ENCODE measurements at regions of chr10 and their contacts with region 1.

Region 1: GRCh38 chr10:116796910-116797513 is 52.3 kb upstream of the ENO4 start:
- DNase-seq: peak; percentile 65
- ATAC-seq: peak; percentile 98
- H3K4me3 ChIP-seq: no peak overlapping the region
- H3K27ac ChIP-seq: no peak overlapping the region
- H3K4me1 ChIP-seq: no peaks in the 10 kb centered on the region
- H3K27me3 ChIP-seq: no peaks in the 10 kb centered on the region
- CTCF ChIP-seq: peak; percentile 98 to 100 (median 100)
- POLR2A ChIP-seq: no peak
- RAD21 ChIP-seq: peak; percentile 100

Region 2: GRCh38 chr10:116627386-116627933 is 169.6 kb before region 1 on chr10:
- CTCF ChIA-PET with region 1: interaction called, 12 read pairs
- POLR2A ChIA-PET with region 1: no interaction called
- RAD21 ChIA-PET with region 1: no interaction called
- intact Hi-C with region 1: no loop called
- DNase-seq: peak; percentile 29
- ATAC-seq: peak; percentile 96
- H3K4me3 ChIP-seq: peak overlapping the region; percentile 38 to 50
- H3K27ac ChIP-seq: no peak overlapping the region
- H3K4me1 ChIP-seq: peaks cover 0 to 8% of the 10 kb centered on the region in 2 experiments; a peak in 1 of 4 replicates
- H3K27me3 ChIP-seq: no peaks in the 10 kb centered on the region
- CTCF ChIP-seq: peak; percentile 68 to 90 (median 76)
- POLR2A ChIP-seq: no peak
- RAD21 ChIP-seq: peak; percentile 94

Region 3: GRCh38 chr10:116771101-116771958 is 25.7 kb before region 1 on chr10:
- CTCF ChIA-PET with region 1: no interaction called
- POLR2A ChIA-PET with region 1: no interaction called
- RAD21 ChIA-PET with region 1: no interaction called
- intact Hi-C with region 1: no loop called
- DNase-seq: no peak
- ATAC-seq: no peak
- H3K4me3 ChIP-seq: no peak overlapping the region
- H3K27ac ChIP-seq: no peak overlapping the region
- H3K4me1 ChIP-seq: peaks cover 12 to 21% of the 10 kb centered on the region in 2 experiments
- H3K27me3 ChIP-seq: peaks cover 6% of the 10 kb centered on the region; the same call in 1 of the 2 replicates
- CTCF ChIP-seq: no peak
- POLR2A ChIP-seq: no peak
- RAD21 ChIP-seq: no peak